ENCODE measurements at regions of chr6 and their contacts with region 1.

Region 1: DNA sequence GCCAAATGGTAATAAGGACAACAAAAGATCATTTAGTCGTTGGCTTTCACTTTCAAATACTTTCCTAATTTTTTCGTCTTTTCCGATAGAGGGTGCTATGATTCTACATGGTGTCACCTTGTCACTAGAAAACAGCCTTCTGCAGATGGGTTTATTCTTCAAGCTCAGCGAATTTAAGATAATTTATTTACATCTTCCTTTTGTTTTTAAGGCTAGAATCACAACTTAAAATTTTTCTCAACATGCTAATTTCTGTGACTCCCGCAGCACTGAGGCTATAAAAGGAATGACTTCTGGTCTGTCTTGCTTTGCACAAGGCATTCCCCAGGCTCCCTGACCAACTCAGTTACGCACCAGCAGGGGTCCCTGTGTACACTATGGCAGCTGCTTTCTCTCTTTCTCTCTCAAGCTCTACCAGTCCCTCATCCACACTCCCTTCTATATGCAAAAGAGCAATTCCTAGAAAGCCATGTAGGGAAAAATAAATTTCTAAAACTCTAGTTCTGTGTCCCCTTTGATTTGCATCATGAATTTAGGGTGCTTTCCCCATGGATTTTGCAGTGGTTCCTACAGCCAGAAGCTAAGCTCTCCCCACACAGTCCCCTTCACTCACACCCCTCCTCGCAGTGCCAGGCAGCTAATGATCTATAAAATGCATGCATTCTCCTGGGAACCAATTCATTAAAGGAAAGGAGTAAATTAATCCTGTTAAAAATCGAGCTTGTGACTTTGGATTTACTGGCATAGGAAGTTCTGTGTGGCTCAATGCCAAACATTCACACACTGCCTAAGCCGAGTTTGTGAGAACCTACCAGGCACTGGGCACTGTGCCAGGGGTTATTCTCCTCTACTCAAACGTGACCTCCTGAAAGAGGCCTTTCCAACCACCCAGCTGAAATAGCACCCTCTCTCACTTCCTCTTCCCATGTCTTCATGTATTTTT is 74.5 kb downstream of the DCDC2 start:
- DNase-seq: peak; percentile 59
- ATAC-seq: peak; percentile 95
- H3K4me3 ChIP-seq: no peak overlapping the region
- H3K27ac ChIP-seq: no peak overlapping the region
- H3K4me1 ChIP-seq: peaks cover 5% of the 10 kb centered on the region; the same call in 1 of the 2 replicates
- H3K27me3 ChIP-seq: peaks cover 0 to 2% of the 10 kb centered on the region in 2 experiments; a peak in 1 of 4 replicates
- CTCF ChIP-seq: peak; percentile 44 to 57 (median 52)
- EP300 ChIP-seq: 0 out of 4 replicates have a peak, but pooled peaks of 1 of the 2 experiments have one; percentile 37
- POLR2A ChIP-seq: no peak
- RAD21 ChIP-seq: peak; percentile 76

Region 2: GRCh38 chr6:23728346-23729106 is 554.8 kb before region 1 on chr6:
- CTCF ChIA-PET with region 1: no interaction called
- POLR2A ChIA-PET with region 1: no interaction called
- RAD21 ChIA-PET with region 1: no interaction called
- SMC1A ChIA-PET with region 1: no interaction called
- in situ Hi-C with region 1: no loop called
- intact Hi-C with region 1: no loop called
- DNase-seq: no peak
- ATAC-seq: no peak
- H3K4me3 ChIP-seq: no peak overlapping the region
- H3K27ac ChIP-seq: no peak overlapping the region
- H3K4me1 ChIP-seq: no peaks in the 10 kb centered on the region
- H3K27me3 ChIP-seq: no peaks in the 10 kb centered on the region
- CTCF ChIP-seq: no peak
- EP300 ChIP-seq: no peak
- POLR2A ChIP-seq: no peak
- RAD21 ChIP-seq: no peak

Region 3: DNA sequence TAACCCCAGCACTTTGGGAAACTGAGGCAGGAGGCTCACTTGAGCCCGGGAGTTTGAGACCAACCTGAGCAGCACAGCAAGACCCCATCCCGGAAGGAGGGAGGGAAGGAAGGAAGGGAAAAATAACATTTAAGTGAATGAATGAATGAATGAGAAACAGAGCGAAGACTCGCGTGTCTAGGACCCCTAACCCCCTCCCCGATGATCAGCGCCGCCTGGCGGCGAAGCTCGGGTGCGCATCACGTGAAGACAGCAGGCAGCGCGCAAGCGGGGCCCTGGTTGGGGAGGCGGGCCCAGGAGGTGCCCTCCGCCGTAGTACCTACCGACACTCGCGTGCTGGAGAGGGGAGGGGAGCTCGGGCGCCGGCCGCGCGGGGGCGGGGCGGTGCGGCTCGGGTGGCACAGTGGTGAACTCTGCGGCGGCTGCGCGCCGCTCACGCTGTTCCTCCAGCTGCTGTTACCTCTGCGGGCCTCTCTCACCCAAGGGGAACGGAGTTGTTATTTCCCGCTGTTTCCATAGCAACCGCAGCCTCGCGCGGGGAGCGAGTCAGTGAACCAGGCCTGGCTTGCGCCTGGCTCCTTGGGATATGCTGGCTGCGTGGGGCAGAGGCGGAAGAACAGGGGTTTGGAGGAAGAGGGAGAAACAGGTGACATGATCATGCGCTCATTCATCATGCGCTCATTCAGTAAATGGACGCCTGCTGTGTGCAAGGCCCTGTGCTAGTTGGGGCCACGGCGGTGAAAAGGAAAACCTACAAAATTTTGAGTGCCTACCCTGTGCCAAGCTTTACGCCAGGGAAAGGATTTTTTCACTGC is 76.5 kb after region 1 on chr6:
- CTCF ChIA-PET with region 1: interaction called, 19 read pairs
- POLR2A ChIA-PET with region 1: no interaction called
- RAD21 ChIA-PET with region 1: interaction called, 12 read pairs
- SMC1A ChIA-PET with region 1: interaction called, 4 read pairs
- in situ Hi-C with region 1: no loop called
- intact Hi-C with region 1: no loop called
- DNase-seq: peak; percentile 28
- ATAC-seq: peak; percentile 97
- H3K4me3 ChIP-seq: peak overlapping the region; percentile 17; the same call in 1 of the 2 replicates
- H3K27ac ChIP-seq: no peak overlapping the region
- H3K4me1 ChIP-seq: no peaks in the 10 kb centered on the region; the same call in 1 of the 2 replicates
- H3K27me3 ChIP-seq: peaks cover 0 to 2% of the 10 kb centered on the region in 2 experiments; a peak in 1 of 4 replicates
- CTCF ChIP-seq: peak; percentile 56 to 91 (median 85)
- EP300 ChIP-seq: no peak; a peak in 1 of 4 replicates
- POLR2A ChIP-seq: no peak
- RAD21 ChIP-seq: peak; percentile 49; the same call in 1 of the 2 replicates

Region 4: DNA sequence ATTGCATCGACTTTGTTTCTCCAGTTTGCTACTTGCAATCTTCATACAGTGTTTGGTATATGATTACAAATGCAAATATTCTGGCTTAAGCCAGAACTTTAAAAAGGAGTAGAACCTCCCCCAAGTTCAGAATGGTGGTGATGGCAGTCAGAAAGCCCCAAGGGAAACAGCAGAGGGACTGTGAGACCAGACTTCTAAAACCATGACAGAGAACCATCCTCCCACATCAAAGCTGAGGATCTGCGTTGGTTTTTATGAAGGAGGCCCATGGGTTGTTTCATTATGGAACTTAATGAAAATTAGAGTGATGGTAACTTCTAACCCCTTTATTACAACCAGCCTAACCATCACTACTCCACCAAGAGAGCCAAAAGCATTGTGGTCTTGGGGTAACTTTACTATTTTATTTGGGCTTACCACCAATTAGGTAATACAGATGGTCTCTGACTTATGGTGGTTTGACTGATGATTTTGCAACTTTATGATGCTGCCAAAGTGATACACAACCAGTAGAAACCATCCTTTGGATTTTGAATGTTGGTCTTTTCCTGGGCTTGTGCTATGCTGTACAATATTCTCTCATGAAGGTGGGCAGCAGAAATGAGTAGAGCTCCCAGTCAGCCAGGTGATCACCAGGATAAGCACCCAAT is 108.6 kb after region 1 on chr6:
- CTCF ChIA-PET with region 1: interaction called, 11 read pairs
- POLR2A ChIA-PET with region 1: no interaction called
- RAD21 ChIA-PET with region 1: interaction called, 7 read pairs
- SMC1A ChIA-PET with region 1: interaction called, 7 read pairs
- in situ Hi-C with region 1: no loop called
- intact Hi-C with region 1: loop called (anchors 1 kb)
- DNase-seq: peak; percentile 65
- ATAC-seq: peak; percentile 97
- H3K4me3 ChIP-seq: no peak overlapping the region
- H3K27ac ChIP-seq: no peak overlapping the region
- H3K4me1 ChIP-seq: no peaks in the 10 kb centered on the region; the same call in 1 of the 2 replicates
- H3K27me3 ChIP-seq: no peaks in the 10 kb centered on the region
- CTCF ChIP-seq: peak in 1 of 3 experiments; percentile 13; a peak in 1 of 6 replicates
- EP300 ChIP-seq: peak in 1 of 2 experiments; percentile 39; a peak in 2 of 4 replicates
- POLR2A ChIP-seq: no peak
- RAD21 ChIP-seq: peak; percentile 39; the same call in 1 of the 2 replicates

Region 5: DNA sequence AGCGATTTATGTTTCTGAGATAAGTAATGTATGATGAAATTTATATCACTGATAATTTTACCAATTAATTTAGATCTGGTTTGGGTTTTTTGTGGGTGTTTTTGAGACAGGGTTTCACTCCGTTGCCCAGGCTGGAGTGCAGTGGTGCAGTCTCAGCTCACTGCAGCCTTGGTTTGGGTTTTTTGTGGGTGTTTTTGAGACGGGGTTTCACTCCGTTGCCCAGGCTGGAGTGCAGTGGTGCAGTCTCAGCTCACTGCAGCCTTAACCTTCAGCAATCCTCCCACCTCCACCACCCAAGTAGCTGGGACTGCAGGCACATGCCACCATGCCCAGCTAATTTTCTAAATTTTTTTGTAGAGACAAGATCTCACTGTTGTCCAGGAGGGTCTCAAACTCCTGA is 132.4 kb after region 1 on chr6:
- CTCF ChIA-PET with region 1: interaction called, 9 read pairs
- POLR2A ChIA-PET with region 1: no interaction called
- RAD21 ChIA-PET with region 1: interaction called, 3 read pairs
- SMC1A ChIA-PET with region 1: interaction called, 9 read pairs
- in situ Hi-C with region 1: no loop called
- intact Hi-C with region 1: loop called (anchors 5 kb)
- DNase-seq: no peak
- ATAC-seq: peak; percentile 97
- H3K4me3 ChIP-seq: no peak overlapping the region
- H3K27ac ChIP-seq: no peak overlapping the region
- H3K4me1 ChIP-seq: no peaks in the 10 kb centered on the region
- H3K27me3 ChIP-seq: no peaks in the 10 kb centered on the region
- CTCF ChIP-seq: no peak
- EP300 ChIP-seq: no peak
- POLR2A ChIP-seq: no peak
- RAD21 ChIP-seq: no peak

Region 6: GRCh38 chr6:24689964-24690363 is 406.6 kb after region 1 on chr6:
- CTCF ChIA-PET with region 1: interaction called, 4 read pairs
- POLR2A ChIA-PET with region 1: no interaction called
- RAD21 ChIA-PET with region 1: no interaction called
- SMC1A ChIA-PET with region 1: no interaction called
- in situ Hi-C with region 1: loop called (anchors 10 kb)
- intact Hi-C with region 1: loop called (anchors 5 kb)
- DNase-seq: no peak
- ATAC-seq: no peak
- H3K4me3 ChIP-seq: no peak overlapping the region
- H3K27ac ChIP-seq: no peak overlapping the region
- H3K4me1 ChIP-seq: no peaks in the 10 kb centered on the region; the same call in 1 of the 2 replicates
- H3K27me3 ChIP-seq: no peaks in the 10 kb centered on the region
- CTCF ChIP-seq: no peak
- EP300 ChIP-seq: no peak
- POLR2A ChIP-seq: no peak
- RAD21 ChIP-seq: no peak

Measured in GM12878 (cell line).